ENCODE measurements at regions of chr2 and their contacts with region 1.

Region 1: DNA sequence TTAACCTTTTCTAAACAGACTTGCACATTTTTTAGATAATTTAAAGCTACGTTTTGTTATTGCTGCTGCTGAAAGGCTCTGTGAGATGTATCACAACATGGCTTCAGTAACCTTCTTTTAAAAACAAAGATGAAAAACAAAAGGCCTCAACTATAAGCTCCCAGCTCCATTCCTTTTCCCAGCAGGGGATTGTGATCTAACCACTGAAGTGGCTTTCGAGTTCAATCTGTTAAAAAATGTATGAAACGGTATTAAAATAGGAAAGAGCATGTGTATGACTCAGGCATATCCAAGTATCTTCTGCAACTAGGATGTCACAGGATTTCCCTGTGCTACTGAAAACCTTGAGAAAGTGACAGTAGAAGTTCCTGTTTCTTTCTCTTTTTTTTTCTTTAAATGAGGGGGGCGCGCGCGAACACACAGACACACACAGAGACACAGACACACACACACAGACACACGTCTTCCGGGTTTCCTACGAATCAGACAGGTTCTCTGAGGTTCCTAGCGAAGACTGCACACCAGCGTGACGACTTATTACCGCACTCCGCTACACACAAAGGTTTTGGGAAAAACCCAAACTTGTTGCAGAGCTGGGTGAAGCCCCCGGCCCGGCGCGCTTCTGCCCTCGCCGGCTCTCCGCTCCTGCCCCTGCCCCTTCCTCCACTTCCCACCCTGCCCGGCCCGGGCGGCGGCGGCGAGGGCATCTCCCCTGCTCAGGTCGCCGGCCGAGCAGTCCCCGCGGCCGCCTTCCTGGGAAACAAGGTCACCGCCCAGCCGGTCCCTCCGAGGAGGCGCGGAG is 86.8 kb downstream of the RBMS1 start:
- DNase-seq: peak; percentile 60 to 95 (median 85)
- ATAC-seq: peak; percentile 92
- H3K4me3 ChIP-seq: peak overlapping the region; percentile 57
- H3K4me3 Mint-ChIP-seq: peak overlapping the region; percentile 87 to 99 (median 92)
- H3K27ac ChIP-seq: peak overlapping the region; percentile 99
- H3K27ac Mint-ChIP-seq: peak overlapping the region; percentile 90 to 99 (median 95)
- H3K4me1 ChIP-seq: peaks cover 54 to 64% of the 10 kb centered on the region in 2 donors
- H3K4me1 Mint-ChIP-seq: peaks cover 37 to 89% (median 80%) of the 10 kb centered on the region in 7 donors
- H3K27me3 ChIP-seq: no peaks in the 10 kb centered on the region
- H3K27me3 Mint-ChIP-seq: peaks cover 0 to 4% (median 0%) of the 10 kb centered on the region in 5 donors

Region 2: GRCh38 chr2:159712143-159712928 is 694.5 kb before region 1 on chr2 and contains the start of gene MARCHF7:
- CTCF ChIA-PET with region 1: no interaction called
- POLR2A ChIA-PET with region 1: no interaction called
- intact Hi-C with region 1: loop called in 1 of 2 experiments (anchors 5 kb)
- DNase-seq: peak; percentile 95 to 99 (median 98)
- ATAC-seq: peak; percentile 96
- H3K4me3 ChIP-seq: peak within 1 kb of the TSS; percentile 98
- H3K4me3 Mint-ChIP-seq: peak within 1 kb of the TSS; percentile 95 to 100 (median 100)
- H3K27ac ChIP-seq: peak within 1 kb of the TSS; percentile 90
- H3K27ac Mint-ChIP-seq: peak within 1 kb of the TSS; percentile 97 to 100 (median 99)
- H3K4me1 ChIP-seq: peaks cover 43 to 44% of the 10 kb centered on the region in 2 donors
- H3K4me1 Mint-ChIP-seq: peaks cover 36 to 63% (median 50%) of the 10 kb centered on the region in 7 donors
- H3K27me3 ChIP-seq: no peaks in the 10 kb centered on the region
- H3K27me3 Mint-ChIP-seq: no peaks in the 10 kb centered on the region
- total RNA-seq, gene MARCHF7: 64.3 to 120 (median 80.2) TPM

Region 3: DNA sequence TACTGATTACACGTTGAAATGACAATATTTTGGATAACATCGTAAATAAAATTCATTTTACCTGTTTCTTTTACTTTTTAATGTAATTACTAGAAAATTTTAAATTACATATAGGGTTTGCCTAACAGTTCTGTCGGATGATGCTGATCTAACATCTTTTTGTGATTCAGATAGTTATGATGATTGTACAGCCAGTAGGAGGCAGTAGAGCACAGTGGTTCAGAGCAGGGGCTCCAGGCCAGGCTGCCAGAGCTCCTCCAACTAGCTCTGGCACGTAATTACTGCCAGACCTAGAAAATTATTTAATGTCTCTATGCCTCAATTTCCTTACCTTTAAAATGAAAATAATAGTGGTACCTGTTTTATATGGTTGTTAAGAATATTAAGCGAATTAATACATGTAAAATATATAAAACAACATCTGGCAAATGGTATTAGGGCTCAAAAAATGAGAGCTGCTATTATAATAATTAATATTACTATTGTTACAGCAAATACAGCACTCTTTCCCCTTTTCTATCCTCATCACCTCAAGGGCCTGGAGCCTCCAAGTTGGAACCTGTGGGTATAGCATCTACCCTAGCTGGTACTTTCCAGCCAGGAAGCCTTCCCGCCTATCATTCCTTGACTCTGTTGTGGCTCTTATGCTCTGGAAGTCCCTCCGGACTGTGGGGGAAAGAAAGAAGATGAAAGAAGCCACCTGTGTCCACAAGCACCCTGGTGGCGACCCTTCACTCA is 296.7 kb before region 1 on chr2:
- CTCF ChIA-PET with region 1: no interaction called
- POLR2A ChIA-PET with region 1: no interaction called
- intact Hi-C with region 1: no loop called
- DNase-seq: peak in 7 of 9 donors; percentile 34 to 74 (median 66)
- ATAC-seq: peak; percentile 85
- H3K4me3 ChIP-seq: no peak overlapping the region
- H3K4me3 Mint-ChIP-seq: no peak overlapping the region
- H3K27ac ChIP-seq: no peak overlapping the region
- H3K27ac Mint-ChIP-seq: no peak overlapping the region
- H3K4me1 ChIP-seq: no peaks in the 10 kb centered on the region
- H3K4me1 Mint-ChIP-seq: no peaks in the 10 kb centered on the region
- H3K27me3 ChIP-seq: no peaks in the 10 kb centered on the region
- H3K27me3 Mint-ChIP-seq: peaks cover 0 to 24% (median 8%) of the 10 kb centered on the region in 5 donors

Region 4: GRCh38 chr2:160332318-160332717 is 74.5 kb before region 1 on chr2:
- CTCF ChIA-PET with region 1: interaction called, 4 read pairs
- POLR2A ChIA-PET with region 1: no interaction called
- intact Hi-C with region 1: loop called in 1 of 2 experiments (anchors 5 kb)
- DNase-seq: peak in 4 of 9 donors; percentile 8 to 26 (median 16)
- ATAC-seq: peak; percentile 66
- H3K4me3 ChIP-seq: no peak overlapping the region
- H3K4me3 Mint-ChIP-seq: peak overlapping the region in 9 of 10 donors; percentile 29 to 69 (median 52)
- H3K27ac ChIP-seq: no peak overlapping the region
- H3K27ac Mint-ChIP-seq: peak overlapping the region in 8 of 9 donors; percentile 0 to 90 (median 60)
- H3K4me1 ChIP-seq: peaks cover 39 to 57% of the 10 kb centered on the region in 2 donors
- H3K4me1 Mint-ChIP-seq: peaks cover 68 to 98% (median 96%) of the 10 kb centered on the region in 7 donors
- H3K27me3 ChIP-seq: no peaks in the 10 kb centered on the region
- H3K27me3 Mint-ChIP-seq: no peaks in the 10 kb centered on the region

Region 5: DNA sequence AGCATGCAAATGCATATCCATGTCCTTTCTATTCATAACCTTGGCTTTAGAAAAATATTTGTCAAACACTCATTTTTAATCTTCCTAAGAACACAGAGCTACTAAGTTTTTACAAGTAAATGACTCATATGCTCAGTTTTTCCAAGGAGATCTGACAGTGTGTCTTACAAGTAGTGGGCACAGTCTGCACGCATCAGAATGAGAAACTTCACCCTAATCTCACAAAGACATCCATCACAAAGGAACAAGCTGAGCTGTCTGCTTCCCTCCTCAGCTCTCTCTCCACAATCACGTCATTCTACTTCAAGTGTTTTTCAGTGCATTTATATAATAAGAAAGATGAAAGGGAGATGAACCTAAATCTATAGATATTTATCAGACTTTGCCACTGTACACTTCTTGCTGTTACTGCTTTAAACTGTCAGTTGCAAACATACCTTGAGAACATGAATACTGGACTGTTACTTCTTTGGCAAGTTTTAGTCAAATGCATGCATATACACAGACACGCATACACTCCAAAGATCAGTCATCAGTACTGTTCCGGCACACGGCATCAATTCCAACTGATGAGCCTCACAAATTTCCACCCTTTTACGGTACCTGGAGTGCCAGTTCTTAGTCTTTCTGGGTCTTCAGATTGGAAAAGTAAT is 11.1 kb after region 1 on chr2:
- CTCF ChIA-PET with region 1: no interaction called
- POLR2A ChIA-PET with region 1: interaction called, 17 read pairs
- intact Hi-C with region 1: loop called in 1 of 2 experiments (anchors 1 kb)
- DNase-seq: peak in 4 of 9 donors; percentile 31 to 76 (median 56)
- ATAC-seq: peak; percentile 84
- H3K4me3 ChIP-seq: no peak overlapping the region
- H3K4me3 Mint-ChIP-seq: peak overlapping the region in 6 of 10 donors; percentile 7 to 52 (median 36)
- H3K27ac ChIP-seq: peak overlapping the region; percentile 43
- H3K27ac Mint-ChIP-seq: peak overlapping the region; percentile 36 to 90 (median 75)
- H3K4me1 ChIP-seq: peaks cover 10 to 31% of the 10 kb centered on the region in 2 donors
- H3K4me1 Mint-ChIP-seq: peaks cover 34 to 88% (median 72%) of the 10 kb centered on the region in 7 donors
- H3K27me3 ChIP-seq: no peaks in the 10 kb centered on the region
- H3K27me3 Mint-ChIP-seq: peaks cover 0 to 3% (median 0%) of the 10 kb centered on the region in 5 donors

Region 6: GRCh38 chr2:160482673-160483072 is 75.9 kb after region 1 on chr2:
- CTCF ChIA-PET with region 1: interaction called, 3 read pairs
- POLR2A ChIA-PET with region 1: interaction called, 3 read pairs
- intact Hi-C with region 1: loop called (anchors 1 to 2 kb)
- DNase-seq: peak in 7 of 9 donors; percentile 58 to 87 (median 78)
- ATAC-seq: peak; percentile 97
- H3K4me3 ChIP-seq: no peak overlapping the region
- H3K4me3 Mint-ChIP-seq: peak overlapping the region; percentile 45 to 81 (median 72)
- H3K27ac ChIP-seq: peak overlapping the region; percentile 70
- H3K27ac Mint-ChIP-seq: peak overlapping the region; percentile 73 to 97 (median 95)
- H3K4me1 ChIP-seq: peaks cover 18 to 66% of the 10 kb centered on the region in 2 donors
- H3K4me1 Mint-ChIP-seq: peaks cover 33 to 100% (median 85%) of the 10 kb centered on the region in 7 donors
- H3K27me3 ChIP-seq: no peaks in the 10 kb centered on the region
- H3K27me3 Mint-ChIP-seq: no peaks in the 10 kb centered on the region

Region 7: DNA sequence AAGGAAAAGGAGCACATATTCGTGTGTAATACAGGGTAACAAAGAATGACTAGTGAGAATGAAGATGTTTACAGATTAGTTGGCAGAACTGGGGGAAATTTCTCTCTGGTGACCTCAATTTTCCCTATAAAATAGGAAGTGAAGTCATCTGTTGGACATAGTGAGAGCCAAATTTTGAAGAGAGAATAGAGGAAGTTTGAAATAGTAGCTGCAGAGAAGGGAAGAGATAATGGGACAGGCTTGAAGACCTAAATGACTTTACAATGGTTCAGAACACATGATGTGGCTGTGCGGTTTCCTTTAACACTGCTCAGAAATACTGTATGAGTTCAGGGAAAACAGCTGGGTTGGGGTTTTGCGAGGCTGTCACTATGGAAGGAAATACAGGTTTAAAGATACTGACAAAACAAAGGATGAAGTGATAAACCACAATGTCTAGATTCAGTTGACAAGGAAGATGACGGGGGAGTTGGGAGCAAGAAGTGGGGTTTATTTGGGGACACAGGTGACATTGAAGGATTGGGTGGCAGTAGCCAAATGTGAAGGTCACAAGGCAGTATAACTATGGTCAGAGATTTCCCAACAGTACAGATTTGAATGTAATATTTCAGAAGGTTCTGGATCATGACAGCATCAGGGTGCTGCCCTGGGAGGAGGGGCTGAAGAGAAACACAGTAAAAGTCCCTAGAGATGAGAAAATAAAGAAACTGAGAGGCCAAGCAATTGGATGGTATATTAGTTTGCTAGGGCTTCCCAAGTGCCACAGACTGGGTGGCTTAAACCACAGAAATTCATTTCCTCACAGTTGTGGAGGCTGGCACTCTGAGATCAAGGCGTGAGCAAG is 670.8 kb after region 1 on chr2:
- CTCF ChIA-PET with region 1: no interaction called
- POLR2A ChIA-PET with region 1: no interaction called
- intact Hi-C with region 1: loop called in 1 of 2 experiments (anchors 2 kb)
- DNase-seq: peak; percentile 10 to 84 (median 73)
- ATAC-seq: peak; percentile 90
- H3K4me3 ChIP-seq: peak overlapping the region; percentile 5
- H3K4me3 Mint-ChIP-seq: peak overlapping the region; percentile 1 to 76 (median 62)
- H3K27ac ChIP-seq: peak overlapping the region; percentile 40
- H3K27ac Mint-ChIP-seq: peak overlapping the region; percentile 60 to 94 (median 88)
- H3K4me1 ChIP-seq: peaks cover 23 to 25% of the 10 kb centered on the region in 2 donors
- H3K4me1 Mint-ChIP-seq: peaks cover 24 to 60% (median 29%) of the 10 kb centered on the region in 7 donors
- H3K27me3 ChIP-seq: no peaks in the 10 kb centered on the region
- H3K27me3 Mint-ChIP-seq: no peaks in the 10 kb centered on the region

Region 8: DNA sequence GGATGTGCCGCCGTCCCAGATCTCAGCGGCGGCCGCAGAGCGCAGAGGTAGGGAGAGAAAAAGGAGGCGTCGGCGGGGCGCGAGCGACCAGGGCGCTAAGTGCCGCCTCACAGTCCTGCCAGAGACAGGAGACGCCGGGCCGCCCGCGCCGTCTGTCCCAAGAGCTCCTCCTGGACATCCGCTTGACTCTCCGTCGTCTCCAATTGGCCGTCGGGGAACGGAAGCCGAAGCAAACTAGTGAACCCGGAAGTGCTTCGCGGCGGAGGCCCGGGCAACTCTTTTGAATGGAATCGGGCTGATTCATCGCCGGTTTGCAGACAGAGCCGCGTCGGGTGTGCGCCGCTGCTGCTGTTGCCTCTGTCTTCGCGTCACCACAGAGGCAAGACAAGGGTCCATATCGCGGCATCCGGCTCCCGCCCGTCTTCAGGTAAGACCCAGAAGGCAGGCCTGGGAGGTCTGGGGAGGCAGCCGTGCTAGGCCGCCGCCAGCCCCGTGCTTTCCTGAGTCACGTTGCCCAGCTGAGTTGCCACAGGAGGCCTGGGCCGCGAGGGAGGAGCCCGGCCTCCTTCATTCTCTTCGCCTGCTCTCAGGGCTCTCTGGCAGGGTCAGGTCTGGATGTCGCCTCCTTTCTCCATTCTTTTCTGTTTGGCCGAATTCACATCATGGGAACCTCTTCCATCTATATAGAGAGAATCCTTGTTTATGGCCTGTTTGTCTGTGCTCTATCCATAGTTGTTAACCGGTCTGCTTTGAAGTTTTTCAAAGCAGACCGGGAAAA is 901.6 kb after region 1 on chr2 and contains the start of gene PSMD14:
- CTCF ChIA-PET with region 1: no interaction called
- POLR2A ChIA-PET with region 1: no interaction called
- intact Hi-C with region 1: loop called in 1 of 2 experiments (anchors 5 kb)
- DNase-seq: peak; percentile 67 to 88 (median 85)
- ATAC-seq: peak; percentile 95
- H3K4me3 ChIP-seq: peak within 1 kb of the TSS; percentile 94
- H3K4me3 Mint-ChIP-seq: peak within 1 kb of the TSS; percentile 89 to 98 (median 95)
- H3K27ac ChIP-seq: peak within 1 kb of the TSS; percentile 77
- H3K27ac Mint-ChIP-seq: peak within 1 kb of the TSS; percentile 92 to 97 (median 95)
- H3K4me1 ChIP-seq: peaks cover 3 to 19% of the 10 kb centered on the region in 2 donors
- H3K4me1 Mint-ChIP-seq: peaks cover 24 to 65% (median 42%) of the 10 kb centered on the region in 7 donors
- H3K27me3 ChIP-seq: no peaks in the 10 kb centered on the region
- H3K27me3 Mint-ChIP-seq: peaks cover 0 to 9% (median 3%) of the 10 kb centered on the region in 5 donors
- total RNA-seq, gene PSMD14: 13.2 to 69.5 (median 23.2) TPM

Measured in naive thymus-derived CD4-positive, alpha-beta T cell (primary cell).